ENCODE measurements at regions of chr11 and their contacts with region 1.

Region 1: GRCh38 chr11:118198370-118198769 is 21.9 kb upstream of the SCN2B start:
- DNase-seq: peak; percentile 92
- ATAC-seq: peak; percentile 35
- H3K4me3 Mint-ChIP-seq: peak overlapping the region; percentile 20
- H3K27ac Mint-ChIP-seq: peak overlapping the region; percentile 71
- H3K4me1 Mint-ChIP-seq: peaks cover 14% of the 10 kb centered on the region
- H3K27me3 Mint-ChIP-seq: no peaks in the 10 kb centered on the region

Region 2: GRCh38 chr11:118060869-118061268 is 137.5 kb before region 1 on chr11:
- CTCF ChIA-PET with region 1: no interaction called
- POLR2A ChIA-PET with region 1: no interaction called
- intact Hi-C with region 1: no loop called
- DNase-seq: no peak
- ATAC-seq: peak; percentile 30
- H3K4me3 Mint-ChIP-seq: no peak overlapping the region
- H3K27ac Mint-ChIP-seq: no peak overlapping the region
- H3K4me1 Mint-ChIP-seq: no peaks in the 10 kb centered on the region
- H3K27me3 Mint-ChIP-seq: peaks cover 5% of the 10 kb centered on the region

Region 3: DNA sequence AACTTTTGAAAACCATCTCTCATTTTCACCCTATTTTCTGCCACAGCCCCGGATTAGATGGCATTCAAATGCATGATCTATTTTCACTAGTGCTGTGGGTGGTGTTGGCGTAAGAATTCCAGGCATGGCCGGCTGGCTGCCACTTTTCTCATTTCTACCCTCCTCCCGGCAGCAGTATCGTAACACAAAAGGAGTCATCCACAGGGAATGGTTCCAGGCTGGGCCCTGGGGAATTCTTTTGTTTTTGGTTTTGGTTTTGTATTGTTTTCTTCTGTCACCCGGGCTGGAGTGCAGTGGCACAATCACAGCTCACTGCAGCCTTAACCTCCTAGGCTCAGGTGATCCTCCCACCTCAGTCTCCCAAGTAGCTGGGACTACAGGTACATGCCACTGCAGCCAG is 12.6 kb after region 1 on chr11:
- CTCF ChIA-PET with region 1: interaction called, 23 read pairs
- POLR2A ChIA-PET with region 1: interaction called, 14 read pairs
- intact Hi-C with region 1: no loop called
- DNase-seq: no peak
- ATAC-seq: no peak
- H3K4me3 Mint-ChIP-seq: no peak overlapping the region
- H3K27ac Mint-ChIP-seq: peak overlapping the region; percentile 59
- H3K4me1 Mint-ChIP-seq: peaks cover 79% of the 10 kb centered on the region
- H3K27me3 Mint-ChIP-seq: no peaks in the 10 kb centered on the region

Region 4: GRCh38 chr11:118240999-118241768 is 42.8 kb after region 1 on chr11:
- CTCF ChIA-PET with region 1: interaction called, 14 read pairs
- POLR2A ChIA-PET with region 1: interaction called, 7 read pairs
- intact Hi-C with region 1: loop called (anchors 1 kb)
- DNase-seq: peak; percentile 82
- ATAC-seq: peak; percentile 87
- H3K4me3 Mint-ChIP-seq: peak overlapping the region; percentile 77
- H3K27ac Mint-ChIP-seq: peak overlapping the region; percentile 94
- H3K4me1 Mint-ChIP-seq: peaks cover 88% of the 10 kb centered on the region
- H3K27me3 Mint-ChIP-seq: no peaks in the 10 kb centered on the region

Region 5: GRCh38 chr11:118277306-118277705 is 78.9 kb after region 1 on chr11:
- CTCF ChIA-PET with region 1: interaction called, 24 read pairs
- POLR2A ChIA-PET with region 1: no interaction called
- intact Hi-C with region 1: no loop called
- DNase-seq: peak; percentile 27
- ATAC-seq: peak; percentile 72
- H3K4me3 Mint-ChIP-seq: no peak overlapping the region
- H3K27ac Mint-ChIP-seq: peak overlapping the region; percentile 20
- H3K4me1 Mint-ChIP-seq: peaks cover 51% of the 10 kb centered on the region
- H3K27me3 Mint-ChIP-seq: no peaks in the 10 kb centered on the region

Region 6: DNA sequence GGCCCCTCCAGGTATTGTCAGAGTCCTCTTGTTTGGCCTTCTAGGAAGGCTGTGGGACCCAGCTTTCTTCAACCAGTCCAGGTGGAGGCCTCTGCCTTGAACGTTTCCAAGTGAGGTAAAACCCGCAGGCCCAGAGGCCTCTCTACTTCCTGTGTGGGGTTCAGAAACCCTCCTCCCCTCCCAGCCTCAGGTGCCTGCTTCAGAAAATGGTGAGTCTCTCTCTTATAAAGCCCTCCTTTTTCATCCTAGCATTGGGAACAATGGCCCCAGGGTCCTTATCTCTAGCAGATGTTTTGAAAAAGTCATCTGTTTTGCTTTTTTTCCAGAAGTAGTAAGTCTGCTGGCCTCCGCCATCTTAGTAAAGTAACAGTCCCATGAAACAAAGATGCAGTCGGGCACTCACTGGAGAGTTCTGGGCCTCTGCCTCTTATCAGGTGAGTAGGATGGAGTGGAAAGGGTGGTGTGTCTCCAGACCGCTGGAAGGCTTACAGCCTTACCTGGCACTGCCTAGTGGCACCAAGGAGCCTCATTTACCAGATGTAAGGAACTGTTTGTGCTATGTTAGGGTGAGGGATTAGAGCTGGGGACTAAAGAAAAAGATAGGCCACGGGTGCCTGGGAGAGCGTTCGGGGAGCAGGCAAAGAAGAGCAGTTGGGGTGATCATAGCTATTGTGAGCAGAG is 106.3 kb after region 1 on chr11 and contains the start of gene CD3E:
- CTCF ChIA-PET with region 1: interaction called, 11 read pairs
- POLR2A ChIA-PET with region 1: interaction called, 6 read pairs
- intact Hi-C with region 1: no loop called
- DNase-seq: peak; percentile 85
- ATAC-seq: peak; percentile 73
- H3K4me3 Mint-ChIP-seq: peak within 1 kb of the TSS; percentile 99
- H3K27ac Mint-ChIP-seq: peak within 1 kb of the TSS; percentile 99
- H3K4me1 Mint-ChIP-seq: peaks cover 73% of the 10 kb centered on the region
- H3K27me3 Mint-ChIP-seq: no peaks in the 10 kb centered on the region
- total RNA-seq, gene CD3E: 400 to 530 TPM

Region 7: GRCh38 chr11:118343981-118344515 is 145.7 kb after region 1 on chr11 and contains the start of gene CD3G:
- CTCF ChIA-PET with region 1: interaction called, 14 read pairs
- POLR2A ChIA-PET with region 1: no interaction called
- intact Hi-C with region 1: loop called (anchors 2 kb)
- DNase-seq: peak; percentile 85
- ATAC-seq: peak; percentile 68
- H3K4me3 Mint-ChIP-seq: peak within 1 kb of the TSS; percentile 83
- H3K27ac Mint-ChIP-seq: peak within 1 kb of the TSS; percentile 100
- H3K4me1 Mint-ChIP-seq: peaks cover 54% of the 10 kb centered on the region
- H3K27me3 Mint-ChIP-seq: no peaks in the 10 kb centered on the region
- total RNA-seq, gene CD3G: 141 to 146 TPM

Region 8: DNA sequence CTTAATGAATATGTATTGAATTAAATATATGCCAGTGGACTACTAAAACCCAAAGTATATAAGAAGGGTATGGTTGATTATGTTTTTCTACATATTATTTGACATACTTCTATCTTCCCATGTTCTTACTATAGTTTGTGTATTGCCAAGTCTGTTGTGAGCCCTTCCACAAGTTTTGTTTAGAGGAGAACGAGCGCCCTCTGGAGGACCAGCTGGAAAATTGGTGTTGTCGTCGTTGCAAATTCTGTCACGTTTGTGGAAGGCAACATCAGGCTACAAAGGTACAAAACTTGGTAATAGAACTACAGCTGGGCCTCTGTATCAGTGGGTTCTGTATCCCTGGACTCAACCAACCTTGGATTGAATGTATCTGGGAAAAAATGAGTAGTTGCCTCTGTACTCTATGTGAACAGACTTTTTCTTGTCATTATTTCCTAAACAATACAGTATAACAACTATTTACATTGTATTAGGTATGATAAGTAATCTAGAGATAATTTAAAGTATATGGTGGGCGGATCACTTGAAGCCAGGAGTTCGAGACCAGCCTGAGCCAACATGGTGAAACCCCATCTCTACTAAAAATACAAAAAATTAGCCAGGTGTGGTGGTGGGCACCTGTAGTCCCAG is 290.2 kb after region 1 on chr11:
- CTCF ChIA-PET with region 1: interaction called, 3 read pairs
- POLR2A ChIA-PET with region 1: no interaction called
- intact Hi-C with region 1: loop called in 1 of 2 experiments (anchors 1 kb)
- DNase-seq: peak; percentile 90
- ATAC-seq: peak; percentile 71
- H3K4me3 Mint-ChIP-seq: no peak overlapping the region
- H3K27ac Mint-ChIP-seq: peak overlapping the region; percentile 10
- H3K4me1 Mint-ChIP-seq: peaks cover 5% of the 10 kb centered on the region
- H3K27me3 Mint-ChIP-seq: no peaks in the 10 kb centered on the region

Measured in activated CD4-positive, alpha-beta T cell treated with anti-CD3 and anti-CD28 coated beads for 36 hours (primary cell).